ENCODE measurements at regions of chr1 and their contacts with region 1.

Region 1: GRCh38 chr1:75724472-75725022 is at the start of gene ACADM:
- DNase-seq: peak; percentile 85
- H3K4me3 ChIP-seq: peak within 1 kb of the TSS; percentile 73 to 99 (median 98)
- H3K27ac ChIP-seq: peak within 1 kb of the TSS; percentile 79
- H3K4me1 ChIP-seq: peaks cover 15% of the 10 kb centered on the region
- H3K27me3 ChIP-seq: no peaks in the 10 kb centered on the region
- CTCF ChIP-seq: no peak
- POLR2A ChIP-seq: peak; percentile 60
- total RNA-seq, gene ACADM: 32.5 and 40.4 TPM in 2 replicates

Region 2: DNA sequence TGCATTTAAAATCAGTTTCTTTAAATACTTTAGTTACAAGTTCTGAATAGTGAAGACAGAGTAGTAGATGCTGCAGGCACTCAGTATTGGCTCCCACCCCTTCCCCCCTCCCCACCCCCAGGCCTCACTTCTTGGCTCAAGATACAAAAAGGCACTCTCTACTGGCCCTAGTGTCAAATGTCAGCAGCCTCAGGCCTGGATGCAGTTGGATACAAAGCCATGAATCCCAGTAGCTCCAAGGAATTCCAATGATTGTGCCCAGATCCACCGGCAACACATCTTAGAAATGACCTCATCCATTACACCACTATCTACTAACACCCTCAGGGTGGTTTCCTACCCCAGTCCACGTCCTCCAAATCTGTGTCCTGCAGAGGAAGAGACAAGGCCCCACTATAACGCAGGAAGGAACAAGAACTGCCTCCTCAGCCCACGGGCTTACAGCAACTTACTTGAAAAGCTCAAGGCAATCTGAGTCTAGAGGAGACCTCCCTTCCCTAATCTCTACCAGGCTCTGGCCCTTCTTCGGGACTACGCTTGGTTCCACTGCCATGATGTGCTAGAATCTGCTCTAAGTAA is 17.6 kb after region 1 on chr1:
- CTCF ChIA-PET with region 1: no interaction called
- POLR2A ChIA-PET with region 1: no interaction called
- dilution Hi-C with region 1: no loop called
- intact Hi-C with region 1: loop called (anchors 1 kb)
- DNase-seq: no peak
- H3K4me3 ChIP-seq: no peak overlapping the region
- H3K27ac ChIP-seq: no peak overlapping the region
- H3K4me1 ChIP-seq: no peaks in the 10 kb centered on the region
- H3K27me3 ChIP-seq: no peaks in the 10 kb centered on the region
- CTCF ChIP-seq: no peak
- POLR2A ChIP-seq: no peak

Region 3: GRCh38 chr1:75765697-75766355 is 41.3 kb after region 1 on chr1:
- CTCF ChIA-PET with region 1: interaction called, 3 read pairs
- POLR2A ChIA-PET with region 1: no interaction called
- dilution Hi-C with region 1: no loop called
- intact Hi-C with region 1: loop called (anchors 2 kb)
- DNase-seq: peak; percentile 78
- H3K4me3 ChIP-seq: peak overlapping the region in 1 of 3 experiments; percentile 27
- H3K27ac ChIP-seq: peak overlapping the region; percentile 86
- H3K4me1 ChIP-seq: peaks cover 14% of the 10 kb centered on the region
- H3K27me3 ChIP-seq: no peaks in the 10 kb centered on the region
- CTCF ChIP-seq: no peak
- POLR2A ChIP-seq: no peak

Region 4: GRCh38 chr1:75785983-75786853 is 61.7 kb after region 1 on chr1 and contains the start of gene RABGGTB:
- CTCF ChIA-PET with region 1: no interaction called
- POLR2A ChIA-PET with region 1: no interaction called
- dilution Hi-C with region 1: no loop called
- intact Hi-C with region 1: loop called (anchors 1 kb)
- DNase-seq: peak; percentile 99
- H3K4me3 ChIP-seq: peak within 1 kb of the TSS; percentile 62 to 99 (median 96)
- H3K27ac ChIP-seq: peak within 1 kb of the TSS; percentile 83
- H3K4me1 ChIP-seq: peaks cover 33% of the 10 kb centered on the region
- H3K27me3 ChIP-seq: no peaks in the 10 kb centered on the region
- CTCF ChIP-seq: no peak
- POLR2A ChIP-seq: peak; percentile 100
- total RNA-seq, gene RABGGTB: 103 and 114 TPM in 2 replicates